ENCODE measurements at regions of chr12 and their contacts with region 1.

Region 1: GRCh38 chr12:116599285-116600136 is 40.3 kb downstream of the MAP1LC3B2 start:
- DNase-seq: peak; percentile 82 to 90 (median 84)
- ATAC-seq: peak; percentile 84
- H3K4me3 ChIP-seq: no peak overlapping the region
- H3K27ac ChIP-seq: peak overlapping the region in 3 of 4 donors; percentile 72 to 79 (median 73)
- H3K4me1 ChIP-seq: peaks cover 22% of the 10 kb centered on the region
- H3K27me3 ChIP-seq: no peaks in the 10 kb centered on the region
- CTCF ChIP-seq: peak; percentile 56 to 72 (median 63)
- POLR2A ChIP-seq: peak in 2 of 3 donors; percentile 36 to 43

Region 2: GRCh38 chr12:116266168-116266601 is 333.3 kb before region 1 on chr12:
- intact Hi-C with region 1: loop called (anchors 5 kb)
- DNase-seq: no peak
- ATAC-seq: peak; percentile 12
- H3K4me3 ChIP-seq: no peak overlapping the region
- H3K27ac ChIP-seq: no peak overlapping the region
- H3K4me1 ChIP-seq: peaks cover 60% of the 10 kb centered on the region
- H3K27me3 ChIP-seq: no peaks in the 10 kb centered on the region
- CTCF ChIP-seq: no peak
- POLR2A ChIP-seq: no peak

Region 3: GRCh38 chr12:116484807-116485206 is 114.7 kb before region 1 on chr12:
- intact Hi-C with region 1: no loop called
- DNase-seq: no peak
- ATAC-seq: no peak
- H3K4me3 ChIP-seq: no peak overlapping the region
- H3K27ac ChIP-seq: no peak overlapping the region
- H3K4me1 ChIP-seq: no peaks in the 10 kb centered on the region
- H3K27me3 ChIP-seq: no peaks in the 10 kb centered on the region
- CTCF ChIP-seq: no peak
- POLR2A ChIP-seq: no peak

Region 4: DNA sequence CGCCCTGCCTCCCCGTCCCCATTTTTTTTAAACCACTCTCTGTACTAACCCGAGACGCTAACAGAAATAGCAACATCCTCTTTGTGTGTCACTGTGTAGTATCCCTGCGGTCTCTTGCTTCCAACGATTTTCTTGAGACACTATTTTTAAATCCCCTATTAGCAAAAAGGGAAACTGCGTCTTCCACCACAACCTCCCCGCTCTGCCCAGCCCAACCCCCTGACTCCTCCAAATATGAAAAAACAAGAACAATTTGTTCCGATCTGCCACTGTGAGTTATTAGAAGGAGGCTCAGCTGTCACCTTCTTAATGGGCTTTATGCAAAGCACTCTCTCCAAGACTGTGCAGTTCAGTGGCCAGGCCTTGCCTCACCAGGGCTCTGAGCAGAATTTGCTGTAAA is 36.0 kb after region 1 on chr12:
- intact Hi-C with region 1: no loop called
- DNase-seq: peak in 1 of 4 donors; percentile 37
- ATAC-seq: no peak
- H3K4me3 ChIP-seq: no peak overlapping the region
- H3K27ac ChIP-seq: peak overlapping the region in 3 of 4 donors; percentile 9 to 50 (median 43)
- H3K4me1 ChIP-seq: peaks cover 79% of the 10 kb centered on the region
- H3K27me3 ChIP-seq: no peaks in the 10 kb centered on the region
- CTCF ChIP-seq: no peak
- POLR2A ChIP-seq: no peak

Region 5: GRCh38 chr12:116662612-116663144 is 63.2 kb after region 1 on chr12:
- intact Hi-C with region 1: no loop called
- DNase-seq: peak; percentile 30 to 61 (median 40)
- ATAC-seq: no peak
- H3K4me3 ChIP-seq: no peak overlapping the region
- H3K27ac ChIP-seq: peak overlapping the region in 2 of 4 donors; percentile 26 to 54
- H3K4me1 ChIP-seq: peaks cover 30% of the 10 kb centered on the region
- H3K27me3 ChIP-seq: no peaks in the 10 kb centered on the region
- CTCF ChIP-seq: no peak
- POLR2A ChIP-seq: no peak